ENCODE measurements at regions of chr2 and their contacts with region 1.

Region 1: GRCh38 chr2:61065715-61066709 is at the start of gene SANBR:
- DNase-seq: peak; percentile 92
- H3K4me3 ChIP-seq: peak within 1 kb of the TSS; percentile 92
- H3K27ac ChIP-seq: peak within 1 kb of the TSS; percentile 86
- H3K4me1 ChIP-seq: peaks cover 4% of the 10 kb centered on the region
- H3K27me3 ChIP-seq: no peaks in the 10 kb centered on the region
- CTCF ChIP-seq: no peak
- total RNA-seq, gene SANBR: 11.1 to 12.9 TPM

Region 2: GRCh38 chr2:61016808-61017555 is 49.0 kb before region 1 on chr2:
- intact Hi-C with region 1: loop called (anchors 5 kb)
- DNase-seq: peak; percentile 93
- H3K4me3 ChIP-seq: peak overlapping the region; percentile 85
- H3K27ac ChIP-seq: peak overlapping the region; percentile 95
- H3K4me1 ChIP-seq: no peaks in the 10 kb centered on the region
- H3K27me3 ChIP-seq: no peaks in the 10 kb centered on the region
- CTCF ChIP-seq: no peak

Region 3: DNA sequence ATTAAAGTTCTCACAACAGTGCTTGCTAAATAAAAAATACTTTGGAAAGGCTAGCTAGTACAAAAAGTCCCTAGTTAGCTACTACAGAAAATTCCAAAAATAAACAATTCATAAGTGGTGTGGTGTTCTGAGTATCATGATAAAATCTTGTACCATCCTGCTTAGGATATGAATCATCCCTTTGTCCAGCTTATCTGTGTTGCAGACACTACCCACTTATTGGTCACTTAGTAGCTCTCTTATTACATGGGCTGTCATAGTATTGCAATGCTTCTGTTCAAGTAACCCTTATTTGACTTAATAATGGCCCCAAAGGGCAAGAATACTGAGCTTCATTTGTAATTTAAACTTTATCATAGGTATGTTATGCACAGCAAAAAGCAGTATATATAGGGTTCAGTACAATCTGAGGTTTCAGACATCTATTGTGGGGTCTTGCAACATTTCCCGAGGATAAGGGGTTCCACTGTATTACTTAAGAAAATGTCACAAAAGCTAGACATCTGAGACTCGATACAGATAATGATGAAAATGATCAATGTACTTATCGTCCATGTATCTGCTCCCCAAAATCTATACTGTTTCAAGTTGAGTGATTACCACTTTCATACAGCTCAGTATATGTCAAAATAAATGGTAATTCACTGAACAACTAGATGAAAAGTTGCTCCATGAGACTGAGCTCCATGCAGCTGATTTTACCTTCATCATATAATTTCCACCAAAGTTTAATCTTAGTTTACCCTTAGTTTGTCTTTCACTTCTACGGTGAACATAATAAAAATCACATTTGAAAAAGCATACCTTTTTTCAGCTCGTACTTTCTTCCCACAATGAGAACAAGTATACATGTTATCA is 189.8 kb after region 1 on chr2:
- intact Hi-C with region 1: no loop called
- DNase-seq: no peak
- H3K4me3 ChIP-seq: no peak overlapping the region
- H3K27ac ChIP-seq: no peak overlapping the region
- H3K4me1 ChIP-seq: no peaks in the 10 kb centered on the region
- H3K27me3 ChIP-seq: no peaks in the 10 kb centered on the region
- CTCF ChIP-seq: no peak